ENCODE measurements at regions of chr3 and their contacts with region 1.

Region 1: GRCh38 chr3:193665370-193665989 is 72.5 kb downstream of the OPA1 start:
- DNase-seq: peak; percentile 63
- ATAC-seq: no peak
- H3K4me3 ChIP-seq: no peak overlapping the region
- H3K27ac ChIP-seq: no peak overlapping the region
- H3K4me1 ChIP-seq: no peaks in the 10 kb centered on the region
- H3K27me3 ChIP-seq: no peaks in the 10 kb centered on the region
- CTCF ChIP-seq: peak; percentile 75

Region 2: GRCh38 chr3:193598202-193598601 is 67.3 kb before region 1 on chr3:
- CTCF ChIA-PET with region 1: no interaction called
- POLR2A ChIA-PET with region 1: interaction called, 11 read pairs
- intact Hi-C with region 1: no loop called
- DNase-seq: no peak
- ATAC-seq: no peak
- H3K4me3 ChIP-seq: no peak overlapping the region
- H3K27ac ChIP-seq: no peak overlapping the region
- H3K4me1 ChIP-seq: peaks cover 7% of the 10 kb centered on the region
- H3K27me3 ChIP-seq: no peaks in the 10 kb centered on the region
- CTCF ChIP-seq: no peak

Region 3: GRCh38 chr3:194344012-194344411 is 678.5 kb after region 1 on chr3:
- CTCF ChIA-PET with region 1: no interaction called
- POLR2A ChIA-PET with region 1: no interaction called
- intact Hi-C with region 1: loop called (anchors 5 kb)
- DNase-seq: peak; percentile 82
- ATAC-seq: peak; percentile 91
- H3K4me3 ChIP-seq: no peak overlapping the region
- H3K27ac ChIP-seq: no peak overlapping the region
- H3K4me1 ChIP-seq: no peaks in the 10 kb centered on the region; the same call in 1 of the 2 replicates
- H3K27me3 ChIP-seq: no peaks in the 10 kb centered on the region
- CTCF ChIP-seq: peak; percentile 98